HEK293 (cell line): ENCODE measurements at regions of chr9 and their contacts with region 1.

Region 1: GRCh38 chr9:128412120-128412790 is 8.4 kb upstream of the CERCAM start:
- H3K4me3 ChIP-seq: no peak overlapping the region
- H3K27ac ChIP-seq: no peak overlapping the region
- H3K4me1 ChIP-seq: no peaks in the 10 kb centered on the region
- CTCF ChIP-seq: no peak

Region 2: DNA sequence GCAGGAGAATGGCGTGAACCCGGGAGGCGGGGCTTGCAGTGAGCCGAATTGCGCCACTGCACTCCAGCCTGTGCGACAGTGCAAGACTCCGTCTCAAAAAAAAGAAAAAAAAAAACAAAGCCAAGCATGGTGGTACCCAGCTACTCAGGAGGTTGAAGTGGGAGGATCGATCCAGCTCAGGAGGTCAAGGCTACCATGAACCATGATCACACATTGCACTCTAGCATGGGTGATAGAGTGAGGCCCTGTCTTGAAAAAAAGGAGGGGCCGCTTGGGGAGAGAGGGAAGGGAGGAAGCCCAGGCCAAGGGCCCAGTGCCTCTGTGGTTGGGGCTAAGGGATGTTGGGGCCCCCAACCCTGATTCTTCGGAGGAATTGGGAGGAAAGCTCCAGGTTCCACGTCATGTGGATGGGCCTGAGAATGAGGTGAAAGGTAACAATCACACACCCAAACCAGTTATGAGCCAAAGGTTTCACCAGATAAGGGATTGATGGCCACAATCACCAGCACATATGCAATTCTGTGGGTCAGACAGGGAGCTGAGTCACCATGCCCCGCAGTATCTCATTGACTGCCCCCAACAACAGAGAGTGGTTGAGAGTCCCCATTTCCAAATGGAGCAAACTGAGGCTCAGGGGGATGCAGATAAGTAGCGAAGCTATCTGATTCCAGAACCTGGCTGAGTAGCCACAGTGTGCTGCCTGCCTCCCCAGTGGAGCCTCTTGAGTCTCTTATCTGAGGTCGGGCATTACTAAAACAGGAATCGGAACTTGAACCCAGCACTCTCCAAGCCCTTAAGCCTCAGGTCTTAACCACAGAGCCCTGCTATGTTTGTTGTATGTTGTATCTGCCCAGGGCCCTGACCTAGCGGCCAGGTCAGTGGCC is 115.7 kb before region 1 on chr9:
- CTCF ChIA-PET with region 1: interaction called, 26 read pairs
- POLR2A ChIA-PET with region 1: interaction called, 5 read pairs
- H3K4me3 ChIP-seq: no peak overlapping the region
- H3K27ac ChIP-seq: no peak overlapping the region
- H3K4me1 ChIP-seq: no peaks in the 10 kb centered on the region
- CTCF ChIP-seq: no peak

Region 3: DNA sequence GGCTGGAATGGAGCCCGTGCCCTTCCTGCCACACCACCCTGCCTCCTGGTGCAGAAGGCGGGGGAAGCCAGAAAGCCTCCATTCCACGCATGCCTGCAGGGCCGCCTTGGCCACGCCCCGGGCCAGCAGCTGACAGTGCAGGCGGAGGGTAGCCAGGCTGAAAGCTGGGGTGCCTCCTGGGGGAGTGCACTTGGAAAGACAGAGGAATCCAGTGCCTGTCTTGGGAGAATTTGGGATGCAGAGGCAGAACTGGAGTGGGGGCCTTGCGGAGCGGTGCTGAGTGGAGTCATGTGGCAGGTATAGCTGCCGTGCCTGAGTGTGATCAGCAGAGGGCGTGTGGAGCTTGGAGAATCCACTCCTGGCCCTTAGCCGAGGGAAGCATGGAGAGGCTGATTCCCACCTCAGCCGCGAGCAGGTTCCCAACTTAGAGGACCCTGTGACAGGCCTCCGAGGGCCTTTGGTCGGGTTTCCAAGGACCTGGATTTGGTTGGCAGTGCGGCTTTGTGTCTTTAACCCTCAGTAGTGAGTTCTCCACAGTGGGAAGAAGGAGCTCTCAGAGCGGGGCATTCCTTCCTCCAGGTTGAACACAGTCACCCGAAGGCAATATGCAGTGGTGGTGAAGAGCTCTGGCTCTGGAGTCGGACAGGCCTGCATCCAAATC is 50.1 kb before region 1 on chr9:
- CTCF ChIA-PET with region 1: interaction called, 69 read pairs
- POLR2A ChIA-PET with region 1: interaction called, 3 read pairs
- H3K4me3 ChIP-seq: no peak overlapping the region
- H3K27ac ChIP-seq: no peak overlapping the region
- H3K4me1 ChIP-seq: no peaks in the 10 kb centered on the region
- CTCF ChIP-seq: peak; percentile 88